A549 (cell line): ENCODE measurements at regions of chr17 and their contacts with region 1.

Region 1: DNA sequence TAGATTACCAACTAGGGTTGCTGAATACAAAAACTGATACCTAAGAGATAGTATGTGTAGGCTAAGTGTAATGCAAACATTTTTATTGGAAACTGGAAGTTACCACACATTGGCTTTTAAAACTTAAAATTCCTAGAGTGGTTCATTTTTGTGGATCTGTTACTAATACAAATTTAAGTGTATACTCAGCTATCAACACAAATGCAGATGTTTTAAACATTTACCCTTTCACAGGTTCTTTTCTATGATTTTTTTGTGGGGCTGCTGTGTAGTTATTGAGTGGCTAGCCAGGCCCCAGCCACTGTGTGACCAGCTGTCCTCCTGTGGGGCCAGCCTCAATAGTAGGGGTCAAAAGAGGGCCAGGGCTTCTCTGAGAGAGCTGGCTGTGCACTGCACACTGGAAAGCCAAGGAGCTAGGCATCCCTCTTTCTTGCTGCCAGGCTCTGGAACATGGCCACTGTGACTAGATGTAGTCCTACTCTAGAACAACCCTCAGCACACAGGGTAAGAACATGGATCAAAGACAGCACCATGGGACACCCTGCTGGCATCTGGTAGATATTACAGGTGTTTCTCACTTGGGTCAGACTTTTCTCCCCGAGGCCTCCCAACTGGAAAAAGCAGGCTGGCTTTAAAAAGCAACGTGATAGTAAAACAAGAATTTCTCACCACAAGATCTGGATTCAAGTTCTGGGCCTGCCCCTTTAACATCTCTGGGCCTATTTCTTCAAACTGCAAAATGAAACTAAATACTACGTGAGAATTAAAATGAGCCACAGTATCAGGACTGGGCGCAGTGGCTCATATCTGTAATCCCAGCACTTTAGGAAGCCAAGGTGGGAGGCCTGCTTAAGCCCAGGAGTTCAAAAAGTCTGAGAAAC is 7.3 kb upstream of the VEZF1 start:
- DNase-seq: peak; percentile 87 to 95
- ATAC-seq: peak; percentile 84 to 88
- H3K4me3 ChIP-seq: no peak overlapping the region
- H3K27ac ChIP-seq: peak overlapping the region; percentile 50 to 76
- H3K4me1 ChIP-seq: peaks cover 63% of the 10 kb centered on the region
- CTCF ChIP-seq: peak; percentile 90
- EP300 ChIP-seq: no peak
- POLR2A ChIP-seq: no peak
- RAD21 ChIP-seq: peak; percentile 93 to 94

Region 2: DNA sequence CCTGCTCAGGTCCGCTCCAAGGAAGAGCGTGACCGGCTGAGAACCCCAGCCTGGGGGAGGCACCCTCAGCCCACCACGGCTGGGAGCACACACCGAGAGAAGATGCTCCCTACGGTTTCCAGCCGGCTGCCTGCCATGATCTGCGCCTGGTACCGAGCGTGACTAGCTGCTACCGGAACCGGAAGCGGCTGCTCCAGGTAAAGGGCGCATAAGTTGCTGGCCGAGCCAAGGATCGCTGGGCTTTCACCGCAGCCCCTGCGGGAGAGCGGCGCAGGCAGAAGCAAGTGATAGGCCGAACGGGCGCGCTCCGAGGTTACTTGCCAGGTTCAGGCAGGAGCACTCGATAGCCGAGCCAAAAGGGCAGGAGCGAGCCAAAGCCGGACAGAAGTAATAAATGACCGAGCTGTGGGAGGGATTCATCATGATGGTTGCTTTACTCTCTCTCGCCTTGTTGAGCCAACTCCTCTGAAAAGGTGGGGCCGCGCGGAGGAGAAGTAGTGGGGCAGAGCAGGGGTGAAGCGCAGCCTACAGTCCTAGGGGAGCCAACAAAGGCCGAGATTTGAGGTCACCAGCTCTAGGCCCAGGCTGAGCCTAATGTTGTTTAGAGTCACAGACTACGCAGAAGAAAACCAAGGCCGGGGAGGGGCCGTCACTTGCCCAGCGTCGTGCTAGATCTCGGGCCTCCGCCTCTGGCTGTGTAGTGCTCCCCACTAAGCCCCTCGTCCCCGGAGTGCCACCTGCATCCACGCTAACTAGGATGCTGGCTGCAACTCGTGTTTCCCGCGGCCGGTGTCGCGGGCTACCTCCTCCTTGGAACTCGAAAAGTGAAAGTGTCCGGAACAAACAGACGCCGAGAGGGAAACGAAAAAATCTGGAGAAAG is 145.2 kb before region 1 on chr17 and contains the start of gene MRPS23:
- CTCF ChIA-PET with region 1: interaction called, 1,377 read pairs
- POLR2A ChIA-PET with region 1: interaction called, 14 read pairs
- DNase-seq: peak; percentile 91 to 99
- ATAC-seq: peak; percentile 93 to 95
- H3K4me3 ChIP-seq: peak within 1 kb of the TSS; percentile 95
- H3K27ac ChIP-seq: peak within 1 kb of the TSS; percentile 93
- H3K4me1 ChIP-seq: peaks cover 54% of the 10 kb centered on the region
- CTCF ChIP-seq: no peak
- EP300 ChIP-seq: no peak
- POLR2A ChIP-seq: peak; percentile 84
- RAD21 ChIP-seq: peak; percentile 28 to 34; a peak in 4 of 5 replicates
- polyA plus RNA-seq, gene MRPS23: 73.2 and 110 TPM in 2 replicates

Region 3: GRCh38 chr17:57902800-57903759 is 92.2 kb before region 1 on chr17:
- CTCF ChIA-PET with region 1: interaction called, 22 read pairs
- POLR2A ChIA-PET with region 1: no interaction called
- DNase-seq: peak; percentile 95 to 99
- ATAC-seq: peak; percentile 85 to 87
- H3K4me3 ChIP-seq: no peak overlapping the region
- H3K27ac ChIP-seq: peak overlapping the region; percentile 94 to 97
- H3K4me1 ChIP-seq: peaks cover 82% of the 10 kb centered on the region
- CTCF ChIP-seq: no peak
- EP300 ChIP-seq: peak; percentile 36 to 72; a peak in 2 of 5 replicates
- POLR2A ChIP-seq: no peak
- RAD21 ChIP-seq: peak; percentile 41 to 53

Region 4: DNA sequence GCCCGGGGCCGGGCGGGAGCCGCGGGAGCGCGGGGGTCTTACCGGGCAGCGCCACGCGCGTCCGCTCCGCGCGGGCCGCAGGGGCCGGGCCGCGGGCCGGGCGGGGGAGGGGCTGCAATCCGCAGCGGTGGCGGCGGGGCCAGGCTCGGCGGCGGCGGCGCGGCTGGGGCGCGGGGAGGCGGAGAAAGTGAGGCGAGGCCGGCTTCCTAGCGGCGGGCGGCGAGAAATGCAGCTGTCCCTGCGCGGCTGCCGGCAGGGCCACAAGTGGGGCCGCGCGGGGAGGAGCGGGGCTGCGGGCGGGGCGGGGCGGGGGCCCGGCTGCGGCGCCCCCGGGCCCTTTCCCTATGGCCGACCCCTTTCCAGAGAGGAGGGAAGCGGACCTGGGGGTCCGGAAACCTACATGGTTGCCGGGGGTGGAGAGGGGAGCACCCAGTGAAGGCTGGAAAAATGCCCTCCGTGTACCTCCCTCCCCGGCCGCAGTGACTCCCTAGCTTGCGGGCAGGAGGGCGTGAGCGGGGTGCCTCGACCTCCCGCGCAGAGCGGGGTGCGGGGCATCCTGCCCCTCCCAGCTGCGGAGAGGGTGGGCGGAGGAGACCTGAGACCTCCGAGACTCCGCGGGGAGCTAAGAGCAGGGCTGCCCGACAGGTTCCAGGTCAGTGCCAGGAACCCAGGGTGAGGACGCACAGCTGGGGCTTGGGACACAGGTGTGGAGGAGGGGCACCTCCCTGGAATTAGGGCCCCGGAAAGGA is 40.0 kb before region 1 on chr17 and contains the start of gene CUEDC1:
- CTCF ChIA-PET with region 1: interaction called, 266 read pairs
- POLR2A ChIA-PET with region 1: interaction called, 6 read pairs
- DNase-seq: peak; percentile 69 to 76
- ATAC-seq: peak; percentile 69 to 79
- H3K4me3 ChIP-seq: peak within 1 kb of the TSS; percentile 92
- H3K27ac ChIP-seq: peak within 1 kb of the TSS; percentile 93 to 100
- H3K4me1 ChIP-seq: peaks cover 67% of the 10 kb centered on the region
- CTCF ChIP-seq: peak; percentile 33; the same call in 2 of the 3 replicates
- EP300 ChIP-seq: no peak
- POLR2A ChIP-seq: peak; percentile 70
- RAD21 ChIP-seq: peak; percentile 9 to 40; a peak in 2 of 5 replicates
- polyA plus RNA-seq, gene CUEDC1: 44.3 and 54.8 TPM in 2 replicates

Region 5: DNA sequence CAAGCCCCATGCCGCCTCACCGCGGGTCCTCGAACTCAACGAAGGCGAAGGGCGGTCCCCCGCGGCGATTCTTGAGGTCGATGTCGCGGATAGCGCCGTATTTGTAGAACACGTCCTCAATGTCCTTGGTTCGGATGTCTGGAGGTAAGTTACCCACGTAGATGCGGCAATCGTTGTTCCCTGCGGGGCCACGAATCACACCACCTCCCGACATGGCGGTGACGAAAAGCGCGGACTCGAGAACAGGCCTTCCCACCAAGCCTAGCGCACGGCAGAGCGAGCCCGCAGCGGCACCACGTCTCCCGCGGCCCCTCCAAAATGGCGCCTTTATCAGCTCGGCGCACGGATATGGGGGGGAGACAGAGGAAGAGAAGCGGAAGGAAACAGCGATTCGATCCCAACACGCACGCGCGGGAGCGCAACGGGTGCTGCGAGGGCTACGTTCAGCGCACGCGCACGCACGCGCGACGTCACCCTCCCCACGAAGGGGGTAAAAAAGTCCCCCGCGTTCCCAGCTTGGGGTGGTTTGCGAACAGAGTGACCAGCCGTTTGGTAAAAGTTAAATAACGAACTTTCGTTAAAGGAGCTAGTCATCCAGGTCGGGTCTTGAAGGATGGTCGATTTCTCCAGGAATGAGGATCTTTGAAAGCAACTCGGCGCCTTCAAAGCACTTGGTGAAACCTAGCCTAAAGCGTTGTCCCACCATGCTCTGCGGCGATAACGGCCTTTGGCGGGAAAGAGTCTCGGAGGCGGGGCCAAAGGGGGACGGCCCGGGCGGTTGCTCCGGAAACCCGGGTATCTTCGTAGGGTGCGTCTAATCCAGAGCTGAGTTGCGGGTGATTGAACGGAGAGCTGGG is 11.8 kb after region 1 on chr17 and contains the start of gene SRSF1:
- CTCF ChIA-PET with region 1: interaction called, 21 read pairs
- POLR2A ChIA-PET with region 1: interaction called, 41 read pairs
- DNase-seq: peak; percentile 98 to 99
- ATAC-seq: peak; percentile 89 to 92
- H3K4me3 ChIP-seq: peak within 1 kb of the TSS; percentile 71
- H3K27ac ChIP-seq: peak within 1 kb of the TSS; percentile 95 to 97
- H3K4me1 ChIP-seq: peaks cover 39% of the 10 kb centered on the region
- CTCF ChIP-seq: no peak
- EP300 ChIP-seq: no peak
- POLR2A ChIP-seq: peak; percentile 98
- RAD21 ChIP-seq: no peak
- polyA plus RNA-seq, gene SRSF1: 332 and 490 TPM in 2 replicates

Region 6: GRCh38 chr17:58089115-58089514 is 93.8 kb after region 1 on chr17:
- CTCF ChIA-PET with region 1: interaction called, 13 read pairs
- POLR2A ChIA-PET with region 1: interaction called, 12 read pairs
- DNase-seq: no peak
- ATAC-seq: no peak
- H3K4me3 ChIP-seq: no peak overlapping the region
- H3K27ac ChIP-seq: no peak overlapping the region
- H3K4me1 ChIP-seq: peaks cover 12% of the 10 kb centered on the region
- CTCF ChIP-seq: no peak
- EP300 ChIP-seq: no peak
- POLR2A ChIP-seq: no peak
- RAD21 ChIP-seq: no peak